Tibial artery (tissue), 4 donors: ENCODE measurements at regions of chr2 and their contacts with region 1.

Region 1: DNA sequence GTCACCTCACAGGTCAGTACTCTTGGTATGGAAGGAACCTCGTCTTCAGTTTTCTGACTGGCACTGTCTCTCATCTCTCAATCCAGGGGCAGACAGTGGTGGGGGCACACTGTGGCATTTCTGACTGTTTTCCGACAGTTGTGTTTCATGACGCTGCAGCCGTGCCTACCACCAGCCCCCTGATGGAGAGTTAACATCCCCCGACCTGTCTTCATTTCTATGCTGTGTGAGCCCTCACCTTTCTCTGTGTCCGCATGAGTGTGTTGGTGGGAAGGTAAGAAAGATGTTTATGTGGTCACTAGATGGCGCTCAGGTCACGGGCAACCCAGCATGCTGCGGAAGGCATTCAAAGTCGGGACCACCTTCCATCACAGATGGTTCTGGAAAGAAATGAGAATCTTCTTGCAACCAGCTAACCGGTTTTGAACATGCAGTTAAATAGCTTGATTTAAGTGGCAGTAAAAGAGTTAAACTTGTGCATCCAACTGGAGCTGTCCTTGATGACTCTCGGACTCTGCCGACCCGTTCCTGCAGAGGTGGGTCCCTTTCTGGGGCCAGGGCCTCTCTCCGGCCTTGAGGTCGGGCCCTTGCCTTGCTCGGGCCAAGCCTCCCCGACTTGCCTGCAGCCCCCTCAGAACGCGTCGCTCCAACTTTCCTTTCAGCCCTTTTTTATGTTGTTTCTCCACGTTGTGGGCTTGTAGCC is 92.4 kb downstream of the DYSF start:
- DNase-seq: peak in 1 of 2 donors; percentile 70
- H3K4me3 ChIP-seq: no peak overlapping the region
- H3K27ac ChIP-seq: no peak overlapping the region
- H3K4me1 ChIP-seq: peaks cover 0 to 4% (median 0%) of the 10 kb centered on the region in 4 donors
- H3K27me3 ChIP-seq: peaks cover 0 to 5% of the 10 kb centered on the region in 2 donors
- CTCF ChIP-seq: peak; percentile 67

Region 2: GRCh38 chr2:71614976-71615766 is 69.4 kb after region 1 on chr2:
- intact Hi-C with region 1: loop called (anchors 5 kb)
- DNase-seq: peak; percentile 87 to 94
- H3K4me3 ChIP-seq: no peak overlapping the region
- H3K27ac ChIP-seq: peak overlapping the region; percentile 77 to 84
- H3K4me1 ChIP-seq: peaks cover 0 to 39% (median 32%) of the 10 kb centered on the region in 4 donors
- H3K27me3 ChIP-seq: no peaks in the 10 kb centered on the region
- CTCF ChIP-seq: peak in 1 of 2 experiments; percentile 16

Region 3: GRCh38 chr2:71796174-71796593 is 250.5 kb after region 1 on chr2:
- intact Hi-C with region 1: loop called (anchors 2 kb)
- DNase-seq: peak in 1 of 2 donors; percentile 60
- H3K4me3 ChIP-seq: no peak overlapping the region
- H3K27ac ChIP-seq: peak overlapping the region in 1 of 2 donors; percentile 3
- H3K4me1 ChIP-seq: peaks cover 0 to 29% (median 16%) of the 10 kb centered on the region in 4 donors
- H3K27me3 ChIP-seq: no peaks in the 10 kb centered on the region
- CTCF ChIP-seq: no peak

Region 4: GRCh38 chr2:71989671-71990070 is 443.9 kb after region 1 on chr2:
- intact Hi-C with region 1: loop called (anchors 5 kb)
- DNase-seq: no peak
- H3K4me3 ChIP-seq: no peak overlapping the region
- H3K27ac ChIP-seq: no peak overlapping the region
- H3K4me1 ChIP-seq: no peaks in the 10 kb centered on the region
- H3K27me3 ChIP-seq: peaks cover 0 to 4% of the 10 kb centered on the region in 2 donors
- CTCF ChIP-seq: no peak